CD8-positive, alpha-beta T cell (primary cell): ENCODE measurements at regions of chr1 and their contacts with region 1.

Region 1: GRCh38 chr1:205273551-205273982 is 45.8 kb downstream of the TMCC2 start:
- DNase-seq: peak; percentile 76 to 94 (median 86)
- ATAC-seq: peak; percentile 88
- H3K4me3 ChIP-seq: peak overlapping the region in 1 of 2 experiments; percentile 44
- H3K4me3 Mint-ChIP-seq: peak overlapping the region; percentile 61
- H3K27ac ChIP-seq: no peak overlapping the region
- H3K27ac Mint-ChIP-seq: peak overlapping the region; percentile 83
- H3K4me1 ChIP-seq: peaks cover 46% of the 10 kb centered on the region
- H3K4me1 Mint-ChIP-seq: peaks cover 40% of the 10 kb centered on the region
- H3K27me3 ChIP-seq: no peaks in the 10 kb centered on the region
- H3K27me3 Mint-ChIP-seq: no peaks in the 10 kb centered on the region
- CTCF ChIP-seq: peak; percentile 95

Region 2: GRCh38 chr1:205294175-205294913 is 20.8 kb after region 1 on chr1:
- CTCF ChIA-PET with region 1: interaction called, 178 read pairs
- POLR2A ChIA-PET with region 1: interaction called, 121 read pairs
- intact Hi-C with region 1: loop called in 1 of 2 experiments (anchors 2 kb)
- DNase-seq: no peak
- ATAC-seq: no peak
- H3K4me3 ChIP-seq: no peak overlapping the region
- H3K4me3 Mint-ChIP-seq: no peak overlapping the region
- H3K27ac ChIP-seq: no peak overlapping the region
- H3K27ac Mint-ChIP-seq: peak overlapping the region; percentile 60
- H3K4me1 ChIP-seq: peaks cover 71% of the 10 kb centered on the region
- H3K4me1 Mint-ChIP-seq: peaks cover 77% of the 10 kb centered on the region
- H3K27me3 ChIP-seq: no peaks in the 10 kb centered on the region
- H3K27me3 Mint-ChIP-seq: no peaks in the 10 kb centered on the region
- CTCF ChIP-seq: no peak

Region 3: DNA sequence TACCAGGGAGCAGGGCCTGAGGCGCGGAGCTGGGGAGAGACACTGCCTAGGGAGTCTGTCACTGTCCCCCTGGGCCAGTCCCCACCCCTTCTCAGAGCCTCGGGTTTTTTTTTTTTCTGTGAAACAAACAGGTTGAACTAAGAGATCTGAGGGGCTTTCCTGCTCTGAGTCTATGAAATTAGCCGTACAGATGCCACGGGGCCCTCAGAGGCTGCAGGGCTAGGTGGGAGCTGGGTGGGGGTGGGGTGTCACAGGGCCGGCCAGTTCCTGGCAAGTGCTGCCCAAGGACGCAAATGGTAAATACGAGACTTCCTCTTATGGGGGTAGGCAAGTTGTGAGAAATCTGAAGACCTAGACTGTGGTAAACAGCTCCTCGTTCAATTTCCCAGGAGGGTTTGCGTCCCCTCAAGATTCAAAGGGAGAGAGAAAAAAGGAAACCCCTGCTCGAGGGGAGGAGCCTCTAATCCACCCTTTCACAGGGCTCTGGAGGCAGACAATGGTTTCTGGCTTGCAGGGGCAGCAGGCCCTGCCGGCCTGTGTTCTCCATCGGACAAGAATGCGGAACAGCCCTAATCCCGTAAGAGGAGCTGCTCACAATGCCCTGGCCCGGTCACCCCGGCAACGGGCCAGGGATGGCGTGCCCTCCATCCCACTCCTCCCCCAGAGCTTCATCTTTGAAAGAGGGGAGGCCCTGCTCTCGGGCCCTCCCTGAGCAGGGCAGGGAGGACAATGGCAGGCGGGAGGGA is 40.2 kb after region 1 on chr1:
- CTCF ChIA-PET with region 1: interaction called, 1,393 read pairs
- POLR2A ChIA-PET with region 1: interaction called, 160 read pairs
- intact Hi-C with region 1: no loop called
- DNase-seq: peak in 7 of 9 experiments; percentile 16 to 89 (median 61)
- ATAC-seq: peak; percentile 80
- H3K4me3 ChIP-seq: peak overlapping the region; percentile 46 to 72
- H3K4me3 Mint-ChIP-seq: peak overlapping the region; percentile 87
- H3K27ac ChIP-seq: peak overlapping the region; percentile 70 to 71
- H3K27ac Mint-ChIP-seq: peak overlapping the region; percentile 96
- H3K4me1 ChIP-seq: peaks cover 93% of the 10 kb centered on the region
- H3K4me1 Mint-ChIP-seq: peaks cover 93% of the 10 kb centered on the region
- H3K27me3 ChIP-seq: no peaks in the 10 kb centered on the region
- H3K27me3 Mint-ChIP-seq: no peaks in the 10 kb centered on the region
- CTCF ChIP-seq: no peak

Region 4: GRCh38 chr1:205346956-205347576 is 73.5 kb after region 1 on chr1:
- CTCF ChIA-PET with region 1: interaction called, 1,393 read pairs
- POLR2A ChIA-PET with region 1: no interaction called
- intact Hi-C with region 1: no loop called
- DNase-seq: no peak
- ATAC-seq: no peak
- H3K4me3 ChIP-seq: no peak overlapping the region
- H3K4me3 Mint-ChIP-seq: no peak overlapping the region
- H3K27ac ChIP-seq: no peak overlapping the region
- H3K27ac Mint-ChIP-seq: no peak overlapping the region
- H3K4me1 ChIP-seq: peaks cover 13% of the 10 kb centered on the region
- H3K4me1 Mint-ChIP-seq: peaks cover 10% of the 10 kb centered on the region
- H3K27me3 ChIP-seq: peaks cover 14 to 17% of the 10 kb centered on the region in 2 experiments
- H3K27me3 Mint-ChIP-seq: peaks cover 46% of the 10 kb centered on the region
- CTCF ChIP-seq: no peak

Region 5: DNA sequence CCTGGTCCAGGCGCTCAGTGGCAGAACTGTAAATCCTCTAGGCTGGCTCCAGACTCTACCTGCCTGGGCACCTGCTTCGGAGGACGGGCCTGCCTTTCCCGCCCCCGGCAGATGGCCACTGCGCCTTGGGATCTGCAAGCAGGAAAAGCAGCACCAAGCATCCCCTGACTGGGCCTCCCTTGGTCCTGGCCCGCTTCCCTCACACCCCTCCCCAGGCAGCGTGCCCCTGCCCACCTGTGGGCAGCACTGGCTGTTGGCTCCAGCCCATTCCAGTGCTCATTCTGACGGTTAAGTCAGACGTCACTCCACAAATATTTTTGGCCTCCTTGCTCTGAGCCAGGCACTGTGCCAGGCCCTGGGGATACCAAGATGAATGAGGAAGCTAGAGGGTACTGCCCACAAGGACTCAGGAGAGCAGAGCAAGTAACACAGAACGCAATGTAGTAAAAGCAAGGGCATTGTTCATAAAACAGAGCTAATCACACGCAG is 204.2 kb after region 1 on chr1:
- CTCF ChIA-PET with region 1: interaction called, 12 read pairs
- POLR2A ChIA-PET with region 1: no interaction called
- intact Hi-C with region 1: no loop called
- DNase-seq: no peak
- ATAC-seq: no peak
- H3K4me3 ChIP-seq: no peak overlapping the region
- H3K4me3 Mint-ChIP-seq: no peak overlapping the region
- H3K27ac ChIP-seq: no peak overlapping the region
- H3K27ac Mint-ChIP-seq: no peak overlapping the region
- H3K4me1 ChIP-seq: peaks cover 27% of the 10 kb centered on the region
- H3K4me1 Mint-ChIP-seq: peaks cover 31% of the 10 kb centered on the region
- H3K27me3 ChIP-seq: peaks cover 0 to 4% of the 10 kb centered on the region in 2 experiments
- H3K27me3 Mint-ChIP-seq: peaks cover 29% of the 10 kb centered on the region
- CTCF ChIP-seq: no peak